Activated CD8-positive, alpha-beta T cell treated with anti-CD3 and anti-CD28 coated beads, Interleukin-2, amount 10 ng/mL, durations not matched to agents 7 days and 5 days (primary cell): ENCODE measurements at regions of chr1 and their contacts with region 1.

Region 1: GRCh38 chr1:166910396-166910994 is 34.4 kb upstream of the TADA1 start:
- DNase-seq: peak; percentile 87
- ATAC-seq: peak; percentile 89
- H3K4me3 Mint-ChIP-seq: no peak overlapping the region
- H3K27ac Mint-ChIP-seq: no peak overlapping the region
- H3K4me1 Mint-ChIP-seq: peaks cover 40% of the 10 kb centered on the region
- H3K27me3 Mint-ChIP-seq: peaks cover 17% of the 10 kb centered on the region

Region 2: GRCh38 chr1:166730299-166730888 is 180.1 kb before region 1 on chr1:
- CTCF ChIA-PET with region 1: no interaction called
- POLR2A ChIA-PET with region 1: no interaction called
- DNase-seq: no peak
- ATAC-seq: no peak
- H3K4me3 Mint-ChIP-seq: no peak overlapping the region
- H3K27ac Mint-ChIP-seq: no peak overlapping the region
- H3K4me1 Mint-ChIP-seq: no peaks in the 10 kb centered on the region
- H3K27me3 Mint-ChIP-seq: peaks cover 2% of the 10 kb centered on the region

Region 3: DNA sequence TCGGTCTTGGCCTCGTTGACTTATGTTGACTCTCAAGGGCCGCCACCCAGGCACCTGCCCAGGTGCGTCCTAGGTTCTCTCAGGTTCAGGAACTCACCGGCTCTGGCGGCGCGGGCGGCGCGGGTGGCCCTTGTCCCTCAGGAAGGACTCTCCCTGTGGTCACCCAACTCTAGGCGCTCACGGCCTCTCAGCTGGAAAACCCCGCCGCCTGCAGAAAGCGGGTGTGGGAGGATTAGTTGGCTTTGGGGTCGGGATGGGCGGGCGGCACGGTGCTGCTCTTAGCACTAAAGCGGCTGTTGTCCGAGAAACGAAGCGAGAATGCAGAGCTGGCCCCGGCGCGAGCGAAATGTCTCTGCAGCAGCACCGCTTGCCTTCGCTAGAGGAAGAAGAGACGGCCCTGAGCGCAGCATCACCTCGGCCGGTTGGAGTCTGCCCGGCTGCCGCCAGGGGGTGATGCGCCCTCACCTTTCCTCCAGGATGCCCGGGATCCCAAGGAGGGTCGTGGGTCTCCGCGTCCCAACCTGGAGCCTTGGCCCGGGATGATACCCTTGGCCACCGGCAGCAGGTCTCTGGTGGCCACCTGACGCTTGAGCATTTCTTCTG is 26.4 kb before region 1 on chr1:
- CTCF ChIA-PET with region 1: interaction called, 73 read pairs
- POLR2A ChIA-PET with region 1: interaction called, 4 read pairs
- DNase-seq: peak; percentile 60
- ATAC-seq: peak; percentile 79
- H3K4me3 Mint-ChIP-seq: peak overlapping the region; percentile 34
- H3K27ac Mint-ChIP-seq: no peak overlapping the region
- H3K4me1 Mint-ChIP-seq: peaks cover 23% of the 10 kb centered on the region
- H3K27me3 Mint-ChIP-seq: peaks cover 32% of the 10 kb centered on the region

Region 4: DNA sequence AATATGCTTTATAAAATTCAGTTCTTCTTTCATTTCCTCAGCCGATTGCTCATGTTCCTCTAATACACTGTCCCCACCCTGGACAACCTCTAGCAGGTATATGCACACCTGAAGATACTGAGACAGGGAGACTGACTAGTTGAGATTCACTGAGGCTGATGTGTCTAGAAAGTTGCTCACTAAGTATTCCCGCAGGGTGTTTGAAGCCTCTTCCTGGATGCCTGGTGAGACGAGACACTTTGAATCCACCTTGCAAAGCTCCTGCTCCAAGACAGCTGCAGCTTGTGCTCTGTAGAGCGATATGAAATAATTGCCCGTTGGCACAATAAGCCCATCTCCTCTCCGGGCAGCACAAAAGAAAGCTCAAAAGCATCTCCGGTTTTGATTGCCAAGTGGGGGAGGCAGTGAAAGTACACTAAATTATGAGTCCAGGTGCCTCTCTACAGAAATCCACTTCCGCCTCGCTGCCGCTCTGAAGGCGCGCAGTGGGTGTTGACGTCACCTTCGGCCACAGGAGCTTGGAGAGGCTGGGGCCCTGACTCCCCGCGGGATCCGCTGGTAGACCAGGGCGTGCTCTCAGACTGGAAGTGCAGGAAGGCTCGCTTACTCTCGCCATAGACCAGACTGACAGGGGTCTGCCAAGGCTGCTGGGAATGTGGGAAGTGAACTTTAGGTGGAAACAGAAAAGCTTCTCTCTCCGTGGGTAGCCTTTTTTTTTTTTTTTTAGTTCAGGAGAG is 133.4 kb after region 1 on chr1:
- CTCF ChIA-PET with region 1: interaction called, 26 read pairs
- POLR2A ChIA-PET with region 1: no interaction called
- DNase-seq: peak; percentile 88
- ATAC-seq: peak; percentile 100
- H3K4me3 Mint-ChIP-seq: peak overlapping the region; percentile 78
- H3K27ac Mint-ChIP-seq: peak overlapping the region; percentile 83
- H3K4me1 Mint-ChIP-seq: peaks cover 18% of the 10 kb centered on the region
- H3K27me3 Mint-ChIP-seq: peaks cover 18% of the 10 kb centered on the region

Region 5: DNA sequence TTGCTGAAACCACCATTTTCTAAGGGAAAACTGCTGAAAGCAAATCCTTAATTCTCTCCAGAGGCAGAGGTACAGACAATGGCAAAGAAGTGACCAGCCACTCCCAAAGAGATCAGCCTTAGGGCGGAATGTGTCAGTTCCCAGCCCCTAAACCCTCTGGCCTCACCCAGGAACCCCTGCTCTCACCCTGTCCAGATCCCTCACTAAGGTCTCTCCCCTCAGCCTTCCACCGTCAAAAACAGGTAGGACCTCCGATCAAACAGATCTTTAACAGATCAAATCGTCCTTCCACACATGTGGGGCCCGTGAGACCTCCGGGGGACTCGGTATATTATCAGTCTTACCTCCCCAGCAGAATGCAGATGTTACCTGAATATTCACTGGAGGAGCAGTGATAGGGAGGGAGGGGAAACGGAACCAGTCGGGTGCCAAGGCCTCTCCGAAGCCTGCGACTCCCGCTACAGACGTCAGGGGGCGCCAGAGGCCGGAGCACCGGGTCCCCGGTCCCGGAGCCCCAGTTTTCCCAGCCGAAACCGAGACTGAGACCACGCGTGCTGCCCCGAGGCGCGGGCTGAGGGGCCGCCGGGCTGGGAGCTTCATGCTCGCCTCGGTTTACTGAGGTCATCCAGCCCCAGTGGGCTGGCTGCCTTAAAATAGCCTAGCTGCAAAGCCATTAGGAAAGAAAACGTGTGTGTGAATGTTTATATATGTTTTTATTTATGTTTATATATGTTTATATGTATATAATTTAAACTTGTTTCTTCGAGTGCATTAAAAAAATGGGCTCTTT is 156.0 kb after region 1 on chr1:
- CTCF ChIA-PET with region 1: interaction called, 838 read pairs
- POLR2A ChIA-PET with region 1: no interaction called
- DNase-seq: peak; percentile 83
- ATAC-seq: peak; percentile 96
- H3K4me3 Mint-ChIP-seq: no peak overlapping the region
- H3K27ac Mint-ChIP-seq: no peak overlapping the region
- H3K4me1 Mint-ChIP-seq: no peaks in the 10 kb centered on the region
- H3K27me3 Mint-ChIP-seq: peaks cover 8% of the 10 kb centered on the region